ENCODE measurements at regions of chr5 and their contacts with region 1.

Region 1: DNA sequence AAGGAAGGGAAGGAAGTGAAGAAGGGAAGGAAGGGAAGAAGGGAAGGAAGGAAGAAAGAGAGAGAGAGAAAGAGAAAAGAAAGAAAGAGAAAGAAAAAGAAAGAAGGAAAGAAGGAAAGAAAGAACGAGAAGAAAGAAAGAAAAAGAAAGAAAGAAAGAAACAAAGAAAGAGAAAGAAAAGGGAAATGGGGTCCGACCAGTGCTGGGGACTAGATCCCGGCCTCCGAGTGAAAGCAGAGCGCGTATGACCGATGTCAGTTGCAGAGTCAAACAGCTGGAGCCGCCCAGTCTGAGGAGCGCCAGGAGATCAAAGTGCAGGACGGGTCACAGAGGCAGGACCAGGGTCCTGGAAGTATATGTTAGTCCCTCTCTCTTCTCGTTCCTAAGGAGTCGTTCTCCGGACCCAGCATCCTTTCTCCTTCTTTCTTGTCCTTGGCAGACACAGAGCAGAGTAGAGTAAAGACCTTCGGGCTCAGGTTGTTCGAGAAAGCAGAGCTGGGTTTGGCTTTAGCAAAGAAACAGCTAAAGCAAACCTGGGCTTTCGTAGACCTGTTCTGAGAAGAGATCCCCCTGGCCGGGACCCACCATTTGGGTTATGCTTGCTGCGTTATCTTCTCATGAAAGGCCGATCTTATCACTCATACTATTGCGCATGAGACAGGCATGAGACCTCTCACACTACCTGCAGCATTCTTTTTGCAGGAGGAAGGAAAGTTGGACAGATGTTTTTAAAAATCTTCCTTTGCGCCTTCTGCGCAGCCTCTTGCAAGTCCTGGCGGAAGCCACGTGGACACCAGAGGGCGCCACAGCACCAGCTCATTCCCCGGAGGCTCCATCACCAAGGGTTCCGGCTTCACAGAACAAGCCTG is 305.2 kb upstream of the MSX2 start:
- DNase-seq: peak; percentile 77
- H3K4me3 ChIP-seq: peak overlapping the region; percentile 32 to 54
- H3K27ac ChIP-seq: no peak overlapping the region; a peak in 2 of 4 replicates
- H3K4me1 ChIP-seq: peaks cover 0 to 21% of the 10 kb centered on the region in 2 experiments; a peak in 2 of 4 replicates
- H3K27me3 ChIP-seq: no peaks in the 10 kb centered on the region
- CTCF ChIP-seq: peak; percentile 95
- EP300 ChIP-seq: no peak
- RAD21 ChIP-seq: peak; percentile 99

Region 2: GRCh38 chr5:174338185-174339010 is 80.8 kb before region 1 on chr5:
- CTCF ChIA-PET with region 1: interaction called, 11 read pairs
- POLR2A ChIA-PET with region 1: no interaction called
- DNase-seq: peak; percentile 77
- H3K4me3 ChIP-seq: 0 out of 4 replicates have a peak overlapping the region, but pooled peaks of 1 of the 2 experiments have one; percentile 3
- H3K27ac ChIP-seq: peak overlapping the region; percentile 59 to 96
- H3K4me1 ChIP-seq: peaks cover 7 to 38% of the 10 kb centered on the region in 2 experiments; a peak in 2 of 4 replicates
- H3K27me3 ChIP-seq: no peaks in the 10 kb centered on the region
- CTCF ChIP-seq: no peak
- EP300 ChIP-seq: peak in 1 of 2 experiments; percentile 61; a peak in 1 of 4 replicates
- RAD21 ChIP-seq: no peak

Region 3: GRCh38 chr5:174431504-174431903 is 12.3 kb after region 1 on chr5:
- CTCF ChIA-PET with region 1: interaction called, 32 read pairs
- POLR2A ChIA-PET with region 1: no interaction called
- DNase-seq: no peak
- H3K4me3 ChIP-seq: no peak overlapping the region
- H3K27ac ChIP-seq: no peak overlapping the region
- H3K4me1 ChIP-seq: no peaks in the 10 kb centered on the region; a peak in 1 of 4 replicates
- H3K27me3 ChIP-seq: no peaks in the 10 kb centered on the region
- CTCF ChIP-seq: no peak
- EP300 ChIP-seq: no peak
- RAD21 ChIP-seq: no peak

Region 4: DNA sequence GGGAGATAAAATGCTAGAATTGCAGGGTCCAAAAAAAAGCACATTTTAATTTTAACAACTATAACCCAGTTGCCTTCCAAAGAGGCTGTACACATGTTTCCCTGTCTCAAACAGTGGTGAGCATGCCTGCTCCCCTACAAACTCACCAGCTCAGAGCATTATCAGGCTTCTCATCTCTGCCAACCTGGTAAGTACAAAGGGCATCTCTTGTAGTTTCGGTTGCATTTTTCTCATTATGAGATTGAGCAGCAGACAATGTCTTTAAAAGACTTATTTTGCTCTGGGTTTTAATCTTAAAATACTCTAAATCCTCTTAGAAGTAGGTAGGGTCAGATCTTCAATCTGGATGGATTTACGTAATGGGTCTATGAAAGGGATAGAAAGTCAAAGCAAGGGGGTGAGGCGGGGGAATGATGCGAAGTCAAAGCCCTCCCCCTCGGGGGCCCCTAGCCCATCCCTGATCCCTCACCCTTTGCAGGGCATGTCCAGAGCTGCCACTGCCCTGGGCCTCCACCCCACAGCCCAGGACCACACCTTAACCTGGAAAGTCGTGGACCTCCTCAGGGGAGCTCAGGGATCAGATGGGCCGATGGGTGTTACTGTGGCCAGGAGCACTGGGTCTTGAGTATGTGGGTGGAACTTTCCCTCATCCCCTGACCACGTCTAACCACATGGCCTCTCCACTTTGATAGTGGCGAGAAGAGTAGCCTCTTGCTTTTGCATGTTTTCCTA is 198.3 kb after region 1 on chr5:
- CTCF ChIA-PET with region 1: interaction called, 14 read pairs
- POLR2A ChIA-PET with region 1: no interaction called
- DNase-seq: peak; percentile 27
- H3K4me3 ChIP-seq: no peak overlapping the region
- H3K27ac ChIP-seq: peak overlapping the region in 1 of 2 experiments; percentile 79; a peak in 2 of 4 replicates
- H3K4me1 ChIP-seq: peaks cover 0 to 34% of the 10 kb centered on the region in 2 experiments; a peak in 2 of 4 replicates
- H3K27me3 ChIP-seq: no peaks in the 10 kb centered on the region
- CTCF ChIP-seq: no peak
- EP300 ChIP-seq: no peak
- RAD21 ChIP-seq: no peak

Region 5: GRCh38 chr5:174655351-174655750 is 236.2 kb after region 1 on chr5:
- CTCF ChIA-PET with region 1: no interaction called
- POLR2A ChIA-PET with region 1: no interaction called
- DNase-seq: no peak
- H3K4me3 ChIP-seq: no peak overlapping the region
- H3K27ac ChIP-seq: no peak overlapping the region
- H3K4me1 ChIP-seq: no peaks in the 10 kb centered on the region; a peak in 1 of 4 replicates
- H3K27me3 ChIP-seq: no peaks in the 10 kb centered on the region
- CTCF ChIP-seq: no peak
- EP300 ChIP-seq: no peak
- RAD21 ChIP-seq: no peak

Region 6: GRCh38 chr5:174741352-174741751 is 322.2 kb after region 1 on chr5:
- CTCF ChIA-PET with region 1: interaction called, 192 read pairs
- POLR2A ChIA-PET with region 1: no interaction called
- DNase-seq: no peak
- H3K4me3 ChIP-seq: no peak overlapping the region
- H3K27ac ChIP-seq: no peak overlapping the region
- H3K4me1 ChIP-seq: no peaks in the 10 kb centered on the region
- H3K27me3 ChIP-seq: no peaks in the 10 kb centered on the region; the same call in 1 of the 2 replicates
- CTCF ChIP-seq: no peak
- EP300 ChIP-seq: no peak
- RAD21 ChIP-seq: no peak

Region 7: GRCh38 chr5:174935854-174936474 is 516.8 kb after region 1 on chr5:
- CTCF ChIA-PET with region 1: interaction called, 11 read pairs
- POLR2A ChIA-PET with region 1: no interaction called
- DNase-seq: peak; percentile 80
- H3K4me3 ChIP-seq: peak overlapping the region in 1 of 2 experiments; percentile 30; a peak in 1 of 4 replicates
- H3K27ac ChIP-seq: no peak overlapping the region
- H3K4me1 ChIP-seq: no peaks in the 10 kb centered on the region; a peak in 1 of 4 replicates
- H3K27me3 ChIP-seq: no peaks in the 10 kb centered on the region
- CTCF ChIP-seq: peak; percentile 87
- EP300 ChIP-seq: no peak
- RAD21 ChIP-seq: peak; percentile 88